Left cardiac atrium (tissue), 4 donors: ENCODE measurements at regions of chr11 and their contacts with region 1.

Region 1: GRCh38 chr11:94128746-94129511 is at the start of gene PANX1:
- DNase-seq: peak; percentile 89
- ATAC-seq: peak; percentile 92 to 93
- total RNA-seq, gene PANX1: 8.8 to 16.2 TPM

Region 2: GRCh38 chr11:94068764-94069163 is 60.2 kb before region 1 on chr11:
- intact Hi-C with region 1: no loop called
- DNase-seq: no peak
- ATAC-seq: no peak

Region 3: GRCh38 chr11:94151903-94152677 is 23.2 kb after region 1 on chr11:
- intact Hi-C with region 1: loop called in 1 of 2 experiments (anchors 2 kb)
- DNase-seq: peak; percentile 46
- ATAC-seq: peak; percentile 94 to 98